Aorta (tissue), 5 donors: ENCODE measurements at regions of chr14 and their contacts with region 1.

Region 1: DNA sequence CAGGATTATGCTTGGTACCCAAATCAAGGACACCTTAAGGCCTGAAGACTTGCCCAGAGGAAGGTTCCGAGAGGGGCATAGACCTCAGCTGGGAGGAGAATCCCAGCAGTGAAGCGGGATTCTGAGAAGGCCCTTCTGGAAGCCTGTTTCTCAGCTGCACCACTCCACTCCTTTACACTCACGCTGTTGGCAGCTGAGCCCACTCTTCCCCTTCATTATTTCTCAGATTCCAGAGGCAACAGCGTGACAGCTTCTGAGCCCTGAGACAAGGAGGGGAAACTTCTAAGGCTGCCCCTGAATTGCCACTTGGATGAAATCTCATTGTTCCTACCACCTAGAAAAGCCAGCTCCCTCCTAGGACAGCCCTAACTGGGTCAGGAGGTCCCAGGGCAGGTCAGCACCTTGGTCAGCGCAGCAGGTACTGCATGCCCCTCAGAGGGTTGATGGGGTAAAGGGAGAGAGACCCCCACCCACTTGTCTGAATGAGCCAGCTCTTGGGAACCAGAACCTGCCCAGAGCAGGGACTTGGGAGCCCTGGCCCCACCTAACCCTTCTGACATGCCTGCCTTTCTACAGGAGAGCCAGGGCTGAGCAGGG is 53.9 kb downstream of the ISCA2 start:
- DNase-seq: peak; percentile 24 to 46
- ATAC-seq: no peak
- H3K4me3 ChIP-seq: no peak overlapping the region
- H3K27ac ChIP-seq: peak overlapping the region in 1 of 2 donors; percentile 16
- H3K4me1 ChIP-seq: peaks cover 0 to 6% of the 10 kb centered on the region in 2 donors
- H3K27me3 ChIP-seq: no peaks in the 10 kb centered on the region

Region 2: GRCh38 chr14:74521756-74522155 is 25.7 kb before region 1 on chr14:
- intact Hi-C with region 1: loop called in 1 of 2 experiments (anchors 1 kb)
- DNase-seq: peak in 1 of 2 donors; percentile 51
- ATAC-seq: no peak
- H3K4me3 ChIP-seq: no peak overlapping the region
- H3K27ac ChIP-seq: no peak overlapping the region
- H3K4me1 ChIP-seq: no peaks in the 10 kb centered on the region
- H3K27me3 ChIP-seq: no peaks in the 10 kb centered on the region